Pancreas (tissue), 10 donors: ENCODE measurements at regions of chr6 and their contacts with region 1.

Region 1: DNA sequence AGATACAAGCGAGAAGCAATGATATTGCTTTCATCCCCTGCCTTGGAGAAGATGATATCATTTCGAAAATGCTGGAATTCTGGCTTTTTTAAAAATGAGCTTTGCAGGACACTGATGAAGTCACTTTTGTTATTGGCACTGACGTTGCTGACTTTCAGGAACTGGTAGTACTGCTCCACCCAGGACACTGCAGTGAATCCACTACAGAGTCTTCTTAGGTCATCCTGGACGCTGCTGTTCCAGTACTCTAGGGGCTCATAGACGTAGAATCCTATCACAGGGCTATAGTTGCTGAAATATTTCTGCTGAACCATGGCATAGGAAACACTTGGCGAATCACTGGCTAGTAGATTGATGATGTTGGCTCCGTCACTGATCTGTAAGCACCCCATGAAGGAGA is 97.2 kb downstream of the OPN5 start:
- DNase-seq: no peak
- ATAC-seq: no peak
- H3K4me3 ChIP-seq: no peak overlapping the region
- H3K27ac ChIP-seq: no peak overlapping the region
- H3K4me1 ChIP-seq: no peaks in the 10 kb centered on the region
- H3K27me3 ChIP-seq: no peaks in the 10 kb centered on the region
- CTCF ChIP-seq: no peak

Region 2: GRCh38 chr6:47752801-47753200 is 126.2 kb before region 1 on chr6:
- intact Hi-C with region 1: no loop called
- DNase-seq: no peak
- ATAC-seq: no peak
- H3K4me3 ChIP-seq: no peak overlapping the region
- H3K27ac ChIP-seq: no peak overlapping the region
- H3K4me1 ChIP-seq: no peaks in the 10 kb centered on the region
- H3K27me3 ChIP-seq: no peaks in the 10 kb centered on the region
- CTCF ChIP-seq: no peak

Region 3: GRCh38 chr6:47787620-47788497 is 91.2 kb before region 1 on chr6:
- intact Hi-C with region 1: no loop called
- DNase-seq: peak; percentile 31 to 86 (median 66)
- ATAC-seq: peak; percentile 89 to 98 (median 96)
- H3K4me3 ChIP-seq: peak overlapping the region in 1 of 4 donors; percentile 6
- H3K27ac ChIP-seq: no peak overlapping the region
- H3K4me1 ChIP-seq: peaks cover 0 to 3% (median 0%) of the 10 kb centered on the region in 3 donors
- H3K27me3 ChIP-seq: peaks cover 0 to 14% (median 0%) of the 10 kb centered on the region in 4 donors
- CTCF ChIP-seq: peak; percentile 85 to 94 (median 86)

Region 4: DNA sequence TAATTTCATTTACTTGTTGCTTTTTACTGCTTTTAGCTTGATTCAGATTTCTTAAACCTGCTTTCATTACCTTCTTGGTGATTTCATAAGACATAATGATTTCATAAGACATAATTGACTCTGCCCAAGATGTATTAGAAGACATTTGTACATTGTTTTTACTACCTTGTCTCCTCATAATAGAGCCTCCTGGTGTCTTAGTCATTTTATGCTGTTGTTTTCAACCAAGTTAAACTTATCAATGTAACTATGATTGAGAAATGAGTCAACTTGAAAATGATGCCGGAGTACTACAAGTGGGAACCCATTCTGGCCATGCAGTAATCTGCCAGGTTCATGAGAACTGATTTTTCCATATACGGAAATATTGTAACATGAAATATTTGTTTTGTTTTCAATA is 1010.4 kb after region 1 on chr6:
- intact Hi-C with region 1: loop called in 1 of 3 experiments (anchors 5 kb)
- DNase-seq: no peak
- ATAC-seq: no peak
- H3K4me3 ChIP-seq: no peak overlapping the region
- H3K27ac ChIP-seq: no peak overlapping the region
- H3K4me1 ChIP-seq: no peaks in the 10 kb centered on the region
- H3K27me3 ChIP-seq: no peaks in the 10 kb centered on the region
- CTCF ChIP-seq: no peak